Esophagus squamous epithelium (tissue), 5 donors: ENCODE measurements at regions of chr2 and their contacts with region 1.

Region 1: GRCh38 chr2:75464348-75464946 is 96.3 kb downstream of the EVA1A start:
- DNase-seq: no peak
- H3K4me3 ChIP-seq: no peak overlapping the region
- H3K27ac ChIP-seq: no peak overlapping the region
- H3K4me1 ChIP-seq: no peaks in the 10 kb centered on the region
- H3K27me3 ChIP-seq: peaks cover 0 to 33% (median 0%) of the 10 kb centered on the region in 4 donors
- CTCF ChIP-seq: peak; percentile 17 to 70 (median 51)
- POLR2A ChIP-seq: no peak

Region 2: GRCh38 chr2:75614056-75614710 is 149.7 kb after region 1 on chr2:
- intact Hi-C with region 1: loop called (anchors 5 kb)
- DNase-seq: no peak
- H3K4me3 ChIP-seq: no peak overlapping the region
- H3K27ac ChIP-seq: no peak overlapping the region
- H3K4me1 ChIP-seq: no peaks in the 10 kb centered on the region
- H3K27me3 ChIP-seq: peaks cover 0 to 30% (median 0%) of the 10 kb centered on the region in 4 donors
- CTCF ChIP-seq: no peak
- POLR2A ChIP-seq: no peak